ENCODE measurements at regions of chr2 and their contacts with region 1.

Region 1: GRCh38 chr2:188524519-188525113 is 232.9 kb downstream of the GULP1 start:
- DNase-seq: no peak
- ATAC-seq: peak; percentile 69; the same call in 2 of the 3 replicates
- H3K4me3 ChIP-seq: no peak overlapping the region
- H3K27ac ChIP-seq: no peak overlapping the region
- H3K4me1 ChIP-seq: no peaks in the 10 kb centered on the region
- H3K27me3 ChIP-seq: no peaks in the 10 kb centered on the region
- CTCF ChIP-seq: peak; percentile 43 to 72 (median 53); a peak in 5 of 6 replicates
- EP300 ChIP-seq: no peak
- POLR2A ChIP-seq: no peak
- RAD21 ChIP-seq: peak; percentile 78

Region 2: GRCh38 chr2:188512456-188512855 is 12.2 kb before region 1 on chr2:
- CTCF ChIA-PET with region 1: interaction called, 12 read pairs
- POLR2A ChIA-PET with region 1: no interaction called
- RAD21 ChIA-PET with region 1: interaction called, 3 read pairs
- SMC1A ChIA-PET with region 1: interaction called, 4 read pairs
- in situ Hi-C with region 1: no loop called
- intact Hi-C with region 1: no loop called
- DNase-seq: no peak
- ATAC-seq: peak; percentile 64
- H3K4me3 ChIP-seq: no peak overlapping the region
- H3K27ac ChIP-seq: no peak overlapping the region
- H3K4me1 ChIP-seq: no peaks in the 10 kb centered on the region
- H3K27me3 ChIP-seq: no peaks in the 10 kb centered on the region
- CTCF ChIP-seq: peak; percentile 17 to 58 (median 24); a peak in 4 of 6 replicates
- EP300 ChIP-seq: no peak
- POLR2A ChIP-seq: no peak
- RAD21 ChIP-seq: peak; percentile 67

Region 3: DNA sequence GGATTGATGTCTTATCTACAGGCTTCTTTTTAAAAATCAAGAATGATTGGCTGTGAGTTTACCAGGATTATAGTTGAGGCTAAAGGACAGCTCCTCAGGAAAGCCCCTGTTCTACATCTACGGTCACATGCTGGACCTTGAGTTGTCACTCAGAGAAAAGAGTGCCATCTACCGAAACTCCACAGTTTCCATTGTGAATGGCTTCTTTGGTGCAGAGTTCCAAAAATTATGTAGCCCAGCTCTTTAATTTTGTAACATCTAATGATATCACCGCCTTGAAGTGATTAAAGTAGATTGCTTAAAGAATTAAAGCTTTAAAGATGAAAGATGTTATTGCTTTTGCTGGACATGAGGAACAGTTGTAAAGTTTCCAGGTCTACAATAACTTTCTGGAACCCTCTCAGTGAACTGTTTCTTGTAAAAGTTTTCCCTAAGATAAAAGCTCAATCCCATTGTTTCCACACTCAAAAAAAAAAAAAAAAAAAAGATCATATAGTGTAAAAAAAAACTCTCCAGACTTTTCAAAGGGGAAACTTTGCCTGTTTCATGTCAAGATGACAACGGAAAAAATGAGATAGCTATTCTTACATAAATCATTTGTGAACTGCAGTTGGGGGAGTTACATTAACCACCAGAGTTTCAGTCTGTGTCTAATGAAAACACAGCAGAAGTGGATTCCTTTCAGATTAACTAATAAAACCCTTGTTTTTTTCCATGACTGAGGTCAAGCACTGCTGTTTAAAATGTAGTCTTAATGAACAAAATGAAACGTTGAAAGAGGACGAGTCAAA is 453.9 kb after region 1 on chr2:
- CTCF ChIA-PET with region 1: interaction called, 75 read pairs
- POLR2A ChIA-PET with region 1: no interaction called
- RAD21 ChIA-PET with region 1: interaction called, 88 read pairs
- SMC1A ChIA-PET with region 1: interaction called, 172 read pairs
- in situ Hi-C with region 1: no loop called
- intact Hi-C with region 1: loop called (anchors 2 kb)
- DNase-seq: peak; percentile 23
- ATAC-seq: peak; percentile 94
- H3K4me3 ChIP-seq: no peak overlapping the region
- H3K27ac ChIP-seq: no peak overlapping the region
- H3K4me1 ChIP-seq: no peaks in the 10 kb centered on the region
- H3K27me3 ChIP-seq: no peaks in the 10 kb centered on the region
- CTCF ChIP-seq: peak; percentile 20 to 52 (median 24); a peak in 2 of 6 replicates
- EP300 ChIP-seq: peak; percentile 62 to 70; a peak in 3 of 4 replicates
- POLR2A ChIP-seq: no peak
- RAD21 ChIP-seq: peak; percentile 52; the same call in 1 of the 2 replicates

Region 4: DNA sequence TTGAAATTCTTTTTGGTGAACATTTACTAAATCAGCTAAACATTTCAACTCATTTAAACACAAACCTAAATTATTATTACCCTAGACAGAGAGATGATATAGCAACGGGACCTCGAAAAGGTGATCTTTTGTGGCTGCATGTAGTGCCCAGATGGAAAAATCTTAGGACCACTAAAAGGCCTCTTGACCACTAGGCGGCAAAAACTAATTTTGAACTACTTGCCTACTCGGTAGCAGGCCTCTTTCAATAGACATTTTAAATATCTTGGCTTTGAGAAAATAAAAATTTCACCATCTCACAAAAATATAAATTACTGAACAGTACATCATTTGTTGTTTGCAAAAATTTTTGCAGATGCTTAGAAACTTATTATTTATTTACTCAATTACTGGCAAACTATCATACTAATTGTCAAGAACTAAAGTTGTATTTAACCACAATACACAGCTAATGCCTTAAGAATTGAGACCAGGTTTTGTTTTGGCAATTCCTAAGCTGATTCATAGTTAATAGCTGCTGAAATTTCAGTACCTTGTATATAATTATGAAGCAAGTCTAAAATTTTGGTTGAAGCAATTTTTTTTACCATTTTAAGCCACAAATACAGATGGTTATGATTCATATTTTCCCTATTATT is 458.9 kb after region 1 on chr2:
- CTCF ChIA-PET with region 1: interaction called, 75 read pairs
- POLR2A ChIA-PET with region 1: no interaction called
- RAD21 ChIA-PET with region 1: interaction called, 88 read pairs
- SMC1A ChIA-PET with region 1: interaction called, 172 read pairs
- in situ Hi-C with region 1: no loop called
- intact Hi-C with region 1: loop called (anchors 2 kb)
- DNase-seq: no peak
- ATAC-seq: peak; percentile 54
- H3K4me3 ChIP-seq: no peak overlapping the region
- H3K27ac ChIP-seq: no peak overlapping the region
- H3K4me1 ChIP-seq: no peaks in the 10 kb centered on the region
- H3K27me3 ChIP-seq: no peaks in the 10 kb centered on the region
- CTCF ChIP-seq: peak; percentile 13 to 43 (median 16); a peak in 2 of 6 replicates
- EP300 ChIP-seq: no peak
- POLR2A ChIP-seq: no peak
- RAD21 ChIP-seq: peak; percentile 12; the same call in 1 of the 2 replicates

Region 5: DNA sequence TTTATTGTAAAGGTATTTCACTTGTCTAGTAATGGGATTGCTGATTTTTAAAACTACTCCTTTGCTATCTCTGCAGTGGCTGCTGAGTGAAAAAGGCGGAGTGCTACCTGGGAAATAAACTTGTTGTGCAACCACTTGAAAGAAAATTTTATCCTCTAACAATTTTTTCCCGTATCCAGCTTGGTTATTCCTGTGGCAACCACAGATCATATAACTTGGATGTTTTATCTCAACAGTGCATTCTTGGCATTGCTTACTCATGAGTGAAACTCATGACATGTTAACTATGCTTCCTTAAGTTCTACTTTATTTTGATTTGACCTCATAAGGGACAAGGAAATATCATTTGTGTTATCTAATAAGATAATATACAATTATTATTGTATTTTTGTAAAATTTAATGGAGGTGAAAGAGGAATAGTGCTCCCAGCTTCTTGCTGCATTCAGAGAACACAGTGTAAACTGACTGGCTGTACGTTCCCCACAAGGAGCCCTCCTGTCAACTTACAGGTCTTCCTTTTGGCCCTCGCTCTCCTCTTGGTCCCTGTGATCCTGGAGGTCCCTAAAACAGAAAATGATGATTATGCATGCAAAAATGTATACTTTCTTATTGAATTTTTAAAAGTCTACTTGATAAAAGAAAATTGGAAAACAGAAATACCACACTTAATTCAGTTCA is 572.3 kb after region 1 on chr2:
- CTCF ChIA-PET with region 1: interaction called, 14 read pairs
- POLR2A ChIA-PET with region 1: no interaction called
- RAD21 ChIA-PET with region 1: interaction called, 3 read pairs
- SMC1A ChIA-PET with region 1: interaction called, 22 read pairs
- in situ Hi-C with region 1: no loop called
- intact Hi-C with region 1: loop called (anchors 5 kb)
- DNase-seq: no peak
- ATAC-seq: no peak
- H3K4me3 ChIP-seq: no peak overlapping the region
- H3K27ac ChIP-seq: no peak overlapping the region
- H3K4me1 ChIP-seq: no peaks in the 10 kb centered on the region
- H3K27me3 ChIP-seq: no peaks in the 10 kb centered on the region
- CTCF ChIP-seq: no peak
- EP300 ChIP-seq: no peak
- POLR2A ChIP-seq: no peak
- RAD21 ChIP-seq: no peak

Region 6: DNA sequence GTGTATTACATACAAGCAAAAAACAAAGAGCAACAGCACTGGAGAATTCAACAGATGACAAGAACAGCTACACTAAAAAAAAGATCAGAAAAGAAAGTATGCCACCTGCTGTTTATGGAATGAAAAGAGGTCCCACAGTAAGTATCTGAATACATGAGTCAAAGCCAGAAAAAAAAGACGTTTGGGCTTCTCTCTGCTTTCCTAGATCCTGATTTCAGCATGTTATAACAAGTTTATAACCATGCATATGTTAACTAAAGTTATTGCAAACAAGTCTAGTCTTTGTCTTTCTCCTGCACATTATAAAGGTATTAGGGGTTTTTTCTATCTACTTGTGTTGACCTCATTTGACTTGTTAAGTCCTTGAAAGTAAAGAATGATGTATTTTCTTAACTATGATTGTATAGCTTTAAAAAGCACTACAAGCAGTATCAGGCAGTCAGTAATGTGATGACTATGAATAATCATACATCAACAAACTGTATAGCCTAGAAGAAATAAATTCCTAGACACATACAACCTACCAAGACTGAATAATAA is 763.4 kb after region 1 on chr2:
- CTCF ChIA-PET with region 1: interaction called, 4 read pairs
- POLR2A ChIA-PET with region 1: no interaction called
- RAD21 ChIA-PET with region 1: interaction called, 10 read pairs
- SMC1A ChIA-PET with region 1: no interaction called
- in situ Hi-C with region 1: no loop called
- intact Hi-C with region 1: loop called (anchors 5 kb)
- DNase-seq: no peak
- ATAC-seq: peak; percentile 89
- H3K4me3 ChIP-seq: no peak overlapping the region
- H3K27ac ChIP-seq: no peak overlapping the region
- H3K4me1 ChIP-seq: no peaks in the 10 kb centered on the region
- H3K27me3 ChIP-seq: no peaks in the 10 kb centered on the region
- CTCF ChIP-seq: peak; percentile 30 to 54 (median 33); a peak in 4 of 6 replicates
- EP300 ChIP-seq: no peak
- POLR2A ChIP-seq: no peak
- RAD21 ChIP-seq: peak; percentile 64